Endothelial cell of umbilical vein (primary cell): ENCODE measurements at regions of chr1 and their contacts with region 1.

Region 1: GRCh38 chr1:244084438-244085162 is 33.5 kb downstream of the ZBTB18 start:
- DNase-seq: peak; percentile 94
- H3K4me3 ChIP-seq: no peak overlapping the region
- H3K27ac ChIP-seq: no peak overlapping the region
- H3K4me1 ChIP-seq: no peaks in the 10 kb centered on the region
- H3K27me3 ChIP-seq: peaks cover 6 to 11% of the 10 kb centered on the region in 2 experiments
- CTCF ChIP-seq: no peak
- POLR2A ChIP-seq: no peak

Region 2: DNA sequence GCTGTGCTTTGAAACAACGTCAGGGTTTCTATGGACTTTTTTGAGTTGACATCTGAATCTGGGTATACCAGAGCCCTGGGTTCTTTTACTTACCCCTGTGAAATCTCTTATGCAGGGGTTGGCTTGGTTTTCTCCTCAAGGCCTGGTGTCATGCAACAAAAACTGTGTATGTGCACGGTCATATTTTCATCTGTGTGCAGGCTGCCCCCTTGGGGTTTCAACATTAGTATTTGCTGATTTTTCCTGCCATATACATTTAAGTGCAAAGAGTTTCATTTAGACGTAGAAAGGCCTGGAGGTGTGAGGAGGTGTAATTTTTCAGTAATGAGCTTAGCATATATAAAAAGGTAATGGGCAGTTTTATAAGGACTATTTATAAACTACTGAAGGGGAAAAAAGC is 55.5 kb before region 1 on chr1:
- CTCF ChIA-PET with region 1: no interaction called
- POLR2A ChIA-PET with region 1: no interaction called
- dilution Hi-C with region 1: no loop called
- intact Hi-C with region 1: no loop called
- DNase-seq: no peak
- H3K4me3 ChIP-seq: no peak overlapping the region
- H3K27ac ChIP-seq: no peak overlapping the region
- H3K4me1 ChIP-seq: no peaks in the 10 kb centered on the region
- H3K27me3 ChIP-seq: peaks cover 0 to 4% of the 10 kb centered on the region in 2 experiments
- CTCF ChIP-seq: no peak
- POLR2A ChIP-seq: no peak

Region 3: DNA sequence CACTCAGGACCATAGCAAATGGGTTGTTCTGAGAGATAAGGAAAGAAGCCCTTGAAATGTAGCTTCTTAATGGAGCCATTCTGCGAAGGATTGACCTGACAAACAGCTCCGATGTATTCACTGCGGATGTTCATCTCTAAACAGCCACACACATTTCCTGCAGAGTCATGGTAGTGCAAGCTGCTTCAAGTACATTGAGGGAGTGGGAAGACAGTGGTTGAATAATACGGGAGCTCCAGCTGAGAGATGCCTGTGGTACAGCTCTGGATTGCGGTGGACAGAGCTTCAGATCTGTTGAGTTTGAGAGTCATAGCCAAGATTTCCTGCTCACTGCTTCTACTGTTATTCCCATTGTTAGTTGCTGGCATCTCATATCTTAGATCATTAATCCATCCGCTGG is 53.1 kb after region 1 on chr1:
- CTCF ChIA-PET with region 1: no interaction called
- POLR2A ChIA-PET with region 1: no interaction called
- dilution Hi-C with region 1: no loop called
- intact Hi-C with region 1: loop called (anchors 5 kb)
- DNase-seq: no peak
- H3K4me3 ChIP-seq: no peak overlapping the region
- H3K27ac ChIP-seq: peak overlapping the region; percentile 75
- H3K4me1 ChIP-seq: peaks cover 26% of the 10 kb centered on the region
- H3K27me3 ChIP-seq: no peaks in the 10 kb centered on the region
- CTCF ChIP-seq: no peak
- POLR2A ChIP-seq: no peak